ENCODE measurements at regions of chr14 and their contacts with region 1.

Region 1: DNA sequence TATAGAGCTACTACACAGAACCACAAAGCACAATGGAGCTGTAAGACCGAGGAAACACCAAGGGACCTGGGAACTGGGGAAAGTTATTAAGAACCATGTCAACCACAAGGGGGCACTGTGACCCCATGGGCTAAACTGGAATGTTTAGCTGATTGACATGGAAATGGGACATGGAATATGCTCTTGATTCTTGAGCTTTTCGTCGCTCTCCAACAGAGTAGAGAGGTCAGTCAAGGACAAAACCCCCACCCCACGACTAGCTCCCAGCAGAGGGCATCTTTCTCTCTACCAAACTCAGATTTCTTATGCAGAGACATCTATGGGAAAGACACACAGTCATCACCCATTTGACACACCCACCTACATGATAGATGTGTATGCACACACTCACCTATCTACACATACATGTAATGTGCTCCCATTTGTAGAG is 10.1 kb downstream of the NDRG2 start:
- DNase-seq: peak; percentile 88
- H3K4me3 Mint-ChIP-seq: no peak overlapping the region
- H3K27ac Mint-ChIP-seq: no peak overlapping the region
- H3K4me1 Mint-ChIP-seq: peaks cover 7% of the 10 kb centered on the region
- H3K27me3 Mint-ChIP-seq: peaks cover 33% of the 10 kb centered on the region
- CTCF ChIP-seq: peak; percentile 90

Region 2: GRCh38 chr14:20998664-20999366 is 16.0 kb before region 1 on chr14 and contains the start of gene SLC39A2:
- CTCF ChIA-PET with region 1: interaction called, 213 read pairs
- POLR2A ChIA-PET with region 1: interaction called, 4 read pairs
- intact Hi-C with region 1: no loop called
- DNase-seq: peak; percentile 83
- H3K4me3 Mint-ChIP-seq: peak within 1 kb of the TSS; percentile 8
- H3K27ac Mint-ChIP-seq: peak within 1 kb of the TSS; percentile 73
- H3K4me1 Mint-ChIP-seq: peaks cover 18% of the 10 kb centered on the region
- H3K27me3 Mint-ChIP-seq: no peaks in the 10 kb centered on the region
- CTCF ChIP-seq: no peak
- total RNA-seq, gene SLC39A2: not detected in 2 replicates

Region 3: DNA sequence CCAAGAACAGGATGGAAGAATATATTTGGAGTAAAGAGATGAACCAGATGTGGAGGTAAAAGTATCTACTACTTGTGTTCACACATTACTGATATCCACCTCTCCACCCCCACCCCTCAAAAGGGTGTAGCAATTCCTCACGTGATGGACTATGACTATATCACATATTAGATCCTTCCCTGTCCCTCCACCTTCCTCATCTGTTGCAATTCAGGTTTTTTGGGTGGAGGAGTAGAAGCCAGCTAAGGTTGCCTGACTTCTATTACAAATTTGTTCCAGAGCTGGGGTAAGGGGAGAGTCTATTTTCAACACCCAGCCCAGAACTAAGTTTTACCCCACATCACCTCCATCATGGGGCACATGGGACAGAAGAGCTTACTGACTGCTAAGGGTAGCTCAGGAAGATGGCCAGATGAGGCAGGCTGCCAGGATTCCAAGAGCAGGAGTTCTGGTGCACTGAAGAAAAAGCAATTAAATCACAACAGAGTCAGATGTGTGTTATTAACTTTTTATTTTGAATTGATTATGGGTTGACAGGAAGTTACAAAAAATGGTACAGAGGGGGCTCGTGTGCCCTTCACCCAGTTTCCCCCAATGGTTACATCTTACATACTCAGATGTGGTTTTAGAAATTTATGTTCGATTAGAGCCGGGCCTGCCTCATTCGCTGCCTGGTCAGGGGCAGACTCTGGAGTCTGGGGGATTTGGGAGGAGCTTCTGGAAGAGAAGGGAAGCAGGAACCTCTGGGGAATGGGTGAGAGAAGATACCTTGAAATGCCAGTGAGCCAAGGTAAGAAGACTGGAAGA is 17.8 kb after region 1 on chr14:
- CTCF ChIA-PET with region 1: interaction called, 104 read pairs
- POLR2A ChIA-PET with region 1: interaction called, 3 read pairs
- intact Hi-C with region 1: no loop called
- DNase-seq: no peak
- H3K4me3 Mint-ChIP-seq: no peak overlapping the region
- H3K27ac Mint-ChIP-seq: no peak overlapping the region
- H3K4me1 Mint-ChIP-seq: no peaks in the 10 kb centered on the region
- H3K27me3 Mint-ChIP-seq: no peaks in the 10 kb centered on the region
- CTCF ChIP-seq: no peak

Region 4: GRCh38 chr14:21049271-21049673 is 34.5 kb after region 1 on chr14:
- CTCF ChIA-PET with region 1: interaction called, 391 read pairs
- POLR2A ChIA-PET with region 1: no interaction called
- intact Hi-C with region 1: no loop called
- DNase-seq: no peak
- H3K4me3 Mint-ChIP-seq: no peak overlapping the region
- H3K27ac Mint-ChIP-seq: no peak overlapping the region
- H3K4me1 Mint-ChIP-seq: peaks cover 8% of the 10 kb centered on the region
- H3K27me3 Mint-ChIP-seq: no peaks in the 10 kb centered on the region
- CTCF ChIP-seq: no peak

Region 5: GRCh38 chr14:21071225-21072030 is 56.7 kb after region 1 on chr14:
- CTCF ChIA-PET with region 1: interaction called, 48 read pairs
- POLR2A ChIA-PET with region 1: interaction called, 4 read pairs
- intact Hi-C with region 1: no loop called
- DNase-seq: peak; percentile 64
- H3K4me3 Mint-ChIP-seq: peak overlapping the region; percentile 83
- H3K27ac Mint-ChIP-seq: peak overlapping the region; percentile 54
- H3K4me1 Mint-ChIP-seq: peaks cover 26% of the 10 kb centered on the region
- H3K27me3 Mint-ChIP-seq: no peaks in the 10 kb centered on the region
- CTCF ChIP-seq: no peak

Region 6: GRCh38 chr14:21136024-21136423 is 121.2 kb after region 1 on chr14:
- CTCF ChIA-PET with region 1: interaction called, 12 read pairs
- POLR2A ChIA-PET with region 1: no interaction called
- intact Hi-C with region 1: no loop called
- DNase-seq: peak; percentile 16
- H3K4me3 Mint-ChIP-seq: no peak overlapping the region
- H3K27ac Mint-ChIP-seq: no peak overlapping the region
- H3K4me1 Mint-ChIP-seq: no peaks in the 10 kb centered on the region
- H3K27me3 Mint-ChIP-seq: no peaks in the 10 kb centered on the region
- CTCF ChIP-seq: peak; percentile 74

Region 7: GRCh38 chr14:21287168-21287567 is 272.4 kb after region 1 on chr14:
- CTCF ChIA-PET with region 1: no interaction called
- POLR2A ChIA-PET with region 1: no interaction called
- intact Hi-C with region 1: no loop called
- DNase-seq: no peak
- H3K4me3 Mint-ChIP-seq: no peak overlapping the region
- H3K27ac Mint-ChIP-seq: no peak overlapping the region
- H3K4me1 Mint-ChIP-seq: no peaks in the 10 kb centered on the region
- H3K27me3 Mint-ChIP-seq: no peaks in the 10 kb centered on the region
- CTCF ChIP-seq: no peak